ENCODE measurements at regions of chr5 and their contacts with region 1.

Region 1: DNA sequence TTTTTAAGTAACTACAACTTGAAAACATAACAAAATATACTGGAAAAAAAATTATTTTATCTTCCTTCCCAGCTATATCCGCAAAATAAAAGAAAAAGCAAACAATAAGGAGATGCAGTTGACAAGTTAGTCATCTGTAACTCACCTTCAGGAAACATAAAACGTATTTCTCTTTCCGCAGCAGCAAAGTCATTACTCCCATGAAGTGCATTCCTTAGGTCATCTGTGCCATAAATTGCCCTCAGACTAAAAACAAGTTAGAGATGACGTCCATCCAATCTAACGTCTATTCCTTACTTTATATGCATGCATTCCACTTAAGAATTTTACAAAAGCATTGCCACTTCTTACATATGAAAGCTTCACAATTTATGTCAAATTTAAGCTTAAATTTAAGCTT is 10.9 kb downstream of the NME5 start:
- DNase-seq: peak; percentile 70
- H3K4me3 ChIP-seq: no peak overlapping the region
- H3K27ac ChIP-seq: no peak overlapping the region
- H3K4me1 ChIP-seq: peaks cover 8% of the 10 kb centered on the region
- H3K27me3 ChIP-seq: no peaks in the 10 kb centered on the region
- CTCF ChIP-seq: no peak
- POLR2A ChIP-seq: no peak

Region 2: DNA sequence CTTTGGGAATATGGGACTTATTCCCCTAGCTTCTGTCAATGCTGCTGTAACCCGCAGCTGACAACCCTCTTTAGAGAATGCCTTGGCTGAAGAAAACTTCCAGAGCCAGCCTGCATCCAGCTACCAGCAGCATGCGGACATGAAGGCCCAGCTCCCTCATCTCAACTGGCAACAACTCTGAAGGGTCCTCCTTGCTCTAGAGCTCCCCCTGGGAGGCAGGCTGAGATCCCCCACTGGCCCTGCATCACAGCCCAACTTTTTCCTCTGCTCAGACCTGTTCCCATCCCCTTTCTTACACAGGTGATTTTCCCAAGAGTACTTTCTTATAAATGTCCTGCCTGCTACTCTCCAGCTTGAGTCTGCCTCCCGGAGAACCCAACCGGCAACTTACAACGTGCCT is 63.2 kb before region 1 on chr5:
- CTCF ChIA-PET with region 1: interaction called, 10 read pairs
- POLR2A ChIA-PET with region 1: no interaction called
- dilution Hi-C with region 1: no loop called
- intact Hi-C with region 1: no loop called
- DNase-seq: no peak
- H3K4me3 ChIP-seq: no peak overlapping the region
- H3K27ac ChIP-seq: no peak overlapping the region
- H3K4me1 ChIP-seq: no peaks in the 10 kb centered on the region
- H3K27me3 ChIP-seq: no peaks in the 10 kb centered on the region
- CTCF ChIP-seq: peak; percentile 16 to 44
- POLR2A ChIP-seq: no peak

Region 3: DNA sequence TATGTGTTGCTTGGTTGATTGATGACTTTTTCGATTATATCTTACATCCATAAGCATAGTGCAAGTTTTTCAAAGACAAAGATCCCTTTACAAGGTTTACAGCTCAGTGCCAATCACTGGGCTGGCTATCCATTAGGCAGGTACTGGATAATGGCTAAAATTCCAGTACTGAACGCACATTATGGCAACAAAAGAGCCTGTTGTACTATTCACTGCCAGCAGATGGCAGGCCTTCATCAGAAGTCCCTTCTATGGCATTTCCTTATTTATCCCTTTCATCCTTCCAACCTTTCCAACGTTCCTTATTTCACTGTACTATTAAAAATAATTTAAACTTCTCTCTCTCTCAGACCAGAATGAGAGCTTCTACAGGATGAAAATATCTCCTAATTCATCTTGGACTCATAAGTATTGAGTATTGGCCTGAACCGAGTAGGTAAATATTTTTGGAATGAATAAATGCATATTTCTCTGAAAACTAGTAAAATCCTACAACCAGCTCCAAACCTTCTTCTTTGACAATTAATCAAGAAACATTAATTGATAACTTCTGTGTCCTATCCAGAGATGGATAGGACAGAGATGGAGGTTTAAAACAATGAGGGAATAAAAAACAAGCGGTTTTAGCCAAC is 51.2 kb before region 1 on chr5:
- CTCF ChIA-PET with region 1: interaction called, 135 read pairs
- POLR2A ChIA-PET with region 1: no interaction called
- dilution Hi-C with region 1: no loop called
- intact Hi-C with region 1: loop called (anchors 1 kb)
- DNase-seq: peak; percentile 68
- H3K4me3 ChIP-seq: no peak overlapping the region
- H3K27ac ChIP-seq: no peak overlapping the region
- H3K4me1 ChIP-seq: peaks cover 3% of the 10 kb centered on the region
- H3K27me3 ChIP-seq: peaks cover 0 to 8% of the 10 kb centered on the region in 2 experiments
- CTCF ChIP-seq: peak; percentile 74 to 78
- POLR2A ChIP-seq: no peak

Region 4: DNA sequence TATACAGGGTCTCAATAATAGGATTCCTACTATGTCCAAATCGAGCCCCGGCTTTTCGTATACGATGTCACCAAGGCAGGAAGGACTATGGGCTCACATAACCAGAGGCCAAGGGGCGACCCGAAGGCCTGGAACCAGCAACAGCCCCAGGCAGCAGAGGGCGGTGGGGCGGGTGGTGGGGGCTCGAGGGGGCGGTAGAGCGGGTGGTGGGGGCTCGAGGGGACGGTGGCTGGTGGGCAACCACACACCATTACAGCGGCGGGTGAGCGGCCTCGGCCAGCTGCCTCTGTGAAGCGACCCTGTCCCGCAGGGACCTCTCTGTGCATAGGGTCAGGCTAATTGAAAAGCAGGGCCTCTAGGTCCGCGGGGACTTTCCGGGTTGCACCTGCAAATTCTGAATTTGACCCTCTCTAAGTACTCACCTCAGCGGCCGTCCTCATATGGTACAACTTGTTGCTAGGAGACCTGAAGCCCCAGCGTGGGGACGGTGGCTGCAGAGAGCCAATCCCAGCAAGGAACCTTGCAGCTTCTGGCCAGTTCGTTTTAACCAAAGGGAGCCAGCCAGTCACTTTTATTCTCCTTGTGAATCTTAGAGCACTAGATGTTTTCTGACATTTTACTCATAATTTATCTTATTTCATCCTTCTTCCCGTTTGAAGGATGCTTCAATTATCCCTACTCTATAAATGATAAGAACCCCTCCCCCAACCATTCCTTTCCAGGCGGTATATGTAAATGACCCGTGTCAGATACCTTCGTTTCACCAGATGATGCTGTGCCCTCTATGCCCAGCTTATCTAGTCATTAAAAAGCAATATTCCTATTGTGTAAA is 10.8 kb after region 1 on chr5 and contains the start of gene NME5:
- CTCF ChIA-PET with region 1: interaction called, 14 read pairs
- POLR2A ChIA-PET with region 1: no interaction called
- dilution Hi-C with region 1: no loop called
- intact Hi-C with region 1: no loop called
- DNase-seq: peak; percentile 64
- H3K4me3 ChIP-seq: peak within 1 kb of the TSS in 2 of 3 experiments; percentile 44 to 74
- H3K27ac ChIP-seq: no peak within 1 kb of the TSS
- H3K4me1 ChIP-seq: peaks cover 5% of the 10 kb centered on the region
- H3K27me3 ChIP-seq: no peaks in the 10 kb centered on the region
- CTCF ChIP-seq: no peak
- POLR2A ChIP-seq: no peak
- total RNA-seq, gene NME5: 1.4 and 1.5 TPM in 2 replicates

Region 5: GRCh38 chr5:138258704-138259292 is 130.5 kb after region 1 on chr5:
- CTCF ChIA-PET with region 1: no interaction called
- POLR2A ChIA-PET with region 1: no interaction called
- dilution Hi-C with region 1: no loop called
- intact Hi-C with region 1: no loop called
- DNase-seq: peak; percentile 36
- H3K4me3 ChIP-seq: no peak overlapping the region
- H3K27ac ChIP-seq: no peak overlapping the region
- H3K4me1 ChIP-seq: peaks cover 2% of the 10 kb centered on the region
- H3K27me3 ChIP-seq: peaks cover 2% of the 10 kb centered on the region in 2 experiments
- CTCF ChIP-seq: no peak
- POLR2A ChIP-seq: no peak